CD8-positive, alpha-beta T cell (primary cell): ENCODE measurements at regions of chr12 and their contacts with region 1.

Region 1: GRCh38 chr12:96489103-96490056 is at the start of gene CFAP54:
- DNase-seq: peak; percentile 91 to 98 (median 95)
- ATAC-seq: peak; percentile 88
- H3K4me3 ChIP-seq: peak within 1 kb of the TSS; percentile 72 to 75
- H3K4me3 Mint-ChIP-seq: peak within 1 kb of the TSS; percentile 91
- H3K27ac ChIP-seq: peak within 1 kb of the TSS; percentile 58 to 76
- H3K27ac Mint-ChIP-seq: peak within 1 kb of the TSS; percentile 82
- H3K4me1 ChIP-seq: peaks cover 23% of the 10 kb centered on the region
- H3K4me1 Mint-ChIP-seq: peaks cover 24% of the 10 kb centered on the region
- H3K27me3 ChIP-seq: no peaks in the 10 kb centered on the region
- H3K27me3 Mint-ChIP-seq: no peaks in the 10 kb centered on the region
- CTCF ChIP-seq: peak; percentile 85
- total RNA-seq, gene CFAP54: 1.0 to 1.2 TPM

Region 2: DNA sequence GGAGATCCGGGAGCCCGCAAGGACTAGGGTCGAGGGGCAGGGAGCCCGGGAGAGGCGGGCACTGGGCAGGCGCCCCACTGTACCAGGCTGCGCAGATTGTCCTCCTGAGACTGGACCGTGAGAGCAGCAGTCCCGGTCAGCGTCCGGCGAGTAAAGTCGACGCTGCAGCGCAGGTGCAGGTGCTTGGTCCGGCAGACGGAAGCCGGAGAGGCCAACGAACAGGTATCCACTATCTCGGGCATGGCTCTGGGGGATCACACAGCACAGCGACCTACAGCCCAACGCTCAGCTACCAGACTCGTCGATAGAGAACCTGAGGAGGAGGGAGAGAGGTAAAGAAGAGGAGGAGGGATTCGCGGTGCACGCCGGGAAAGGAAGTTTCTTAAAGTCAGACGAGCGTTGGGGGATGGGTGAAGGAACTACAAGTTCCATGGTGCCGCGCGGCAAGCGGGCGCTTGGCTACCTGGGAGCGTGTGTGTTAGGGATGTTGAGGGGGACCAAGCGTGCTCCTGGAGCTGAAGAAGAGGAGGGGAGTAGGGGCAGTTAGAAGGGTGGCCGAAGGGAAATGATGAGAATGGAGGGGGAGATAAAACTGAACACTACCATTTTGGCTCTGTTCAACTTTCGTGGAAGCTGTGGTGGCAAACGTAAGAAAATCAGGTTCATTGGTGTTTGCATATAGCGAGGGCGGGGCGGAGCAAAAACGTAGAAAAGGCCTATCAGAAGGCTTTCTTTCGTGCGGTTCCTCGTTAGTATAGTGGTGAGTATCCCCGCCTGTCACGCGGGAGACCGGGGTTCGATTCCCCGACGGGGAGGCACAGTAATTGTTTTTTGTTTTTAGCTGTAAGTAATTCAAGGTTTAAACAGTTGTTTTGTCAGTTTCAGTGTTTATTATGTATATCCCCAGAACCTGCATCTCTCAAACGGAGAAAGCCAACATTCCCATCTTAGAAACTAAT is 453.8 kb before region 1 on chr12 and contains the start of gene LTA4H:
- CTCF ChIA-PET with region 1: no interaction called
- POLR2A ChIA-PET with region 1: no interaction called
- intact Hi-C with region 1: loop called in 1 of 2 experiments (anchors 1 kb)
- DNase-seq: peak; percentile 90 to 99 (median 97)
- ATAC-seq: peak; percentile 92
- H3K4me3 ChIP-seq: peak within 1 kb of the TSS; percentile 65 to 92
- H3K4me3 Mint-ChIP-seq: no peak within 1 kb of the TSS
- H3K27ac ChIP-seq: peak within 1 kb of the TSS; percentile 68 to 78
- H3K27ac Mint-ChIP-seq: no peak within 1 kb of the TSS
- H3K4me1 ChIP-seq: peaks cover 14% of the 10 kb centered on the region
- H3K4me1 Mint-ChIP-seq: peaks cover 12% of the 10 kb centered on the region
- H3K27me3 ChIP-seq: no peaks in the 10 kb centered on the region
- H3K27me3 Mint-ChIP-seq: no peaks in the 10 kb centered on the region
- CTCF ChIP-seq: no peak
- total RNA-seq, gene LTA4H: 38.4 to 42.9 TPM

Region 3: GRCh38 chr12:96237465-96238077 is 251.8 kb before region 1 on chr12:
- CTCF ChIA-PET with region 1: no interaction called
- POLR2A ChIA-PET with region 1: no interaction called
- intact Hi-C with region 1: loop called in 1 of 2 experiments (anchors 2 kb)
- DNase-seq: peak in 8 of 9 experiments; percentile 32 to 86 (median 62)
- ATAC-seq: peak; percentile 13
- H3K4me3 ChIP-seq: no peak overlapping the region
- H3K4me3 Mint-ChIP-seq: peak overlapping the region; percentile 10
- H3K27ac ChIP-seq: peak overlapping the region in 1 of 2 experiments; percentile 69
- H3K27ac Mint-ChIP-seq: peak overlapping the region; percentile 64
- H3K4me1 ChIP-seq: peaks cover 48% of the 10 kb centered on the region
- H3K4me1 Mint-ChIP-seq: peaks cover 66% of the 10 kb centered on the region
- H3K27me3 ChIP-seq: no peaks in the 10 kb centered on the region
- H3K27me3 Mint-ChIP-seq: no peaks in the 10 kb centered on the region
- CTCF ChIP-seq: no peak

Region 4: GRCh38 chr12:96343347-96343954 is 145.9 kb before region 1 on chr12:
- CTCF ChIA-PET with region 1: no interaction called
- POLR2A ChIA-PET with region 1: no interaction called
- intact Hi-C with region 1: no loop called
- DNase-seq: peak in 2 of 9 experiments; percentile 64 to 76
- ATAC-seq: peak; percentile 53
- H3K4me3 ChIP-seq: no peak overlapping the region
- H3K4me3 Mint-ChIP-seq: no peak overlapping the region
- H3K27ac ChIP-seq: no peak overlapping the region
- H3K27ac Mint-ChIP-seq: peak overlapping the region; percentile 18
- H3K4me1 ChIP-seq: peaks cover 22% of the 10 kb centered on the region
- H3K4me1 Mint-ChIP-seq: peaks cover 61% of the 10 kb centered on the region
- H3K27me3 ChIP-seq: no peaks in the 10 kb centered on the region
- H3K27me3 Mint-ChIP-seq: no peaks in the 10 kb centered on the region
- CTCF ChIP-seq: no peak

Region 5: GRCh38 chr12:96434107-96434506 is 55.3 kb before region 1 on chr12:
- CTCF ChIA-PET with region 1: no interaction called
- POLR2A ChIA-PET with region 1: no interaction called
- intact Hi-C with region 1: loop called (anchors 2 to 5 kb)
- DNase-seq: peak; percentile 37 to 96 (median 67)
- ATAC-seq: peak; percentile 97
- H3K4me3 ChIP-seq: peak overlapping the region in 1 of 2 experiments; percentile 24
- H3K4me3 Mint-ChIP-seq: peak overlapping the region; percentile 45
- H3K27ac ChIP-seq: peak overlapping the region; percentile 69 to 77
- H3K27ac Mint-ChIP-seq: peak overlapping the region; percentile 87
- H3K4me1 ChIP-seq: peaks cover 30% of the 10 kb centered on the region
- H3K4me1 Mint-ChIP-seq: peaks cover 36% of the 10 kb centered on the region
- H3K27me3 ChIP-seq: no peaks in the 10 kb centered on the region
- H3K27me3 Mint-ChIP-seq: no peaks in the 10 kb centered on the region
- CTCF ChIP-seq: no peak

Region 6: DNA sequence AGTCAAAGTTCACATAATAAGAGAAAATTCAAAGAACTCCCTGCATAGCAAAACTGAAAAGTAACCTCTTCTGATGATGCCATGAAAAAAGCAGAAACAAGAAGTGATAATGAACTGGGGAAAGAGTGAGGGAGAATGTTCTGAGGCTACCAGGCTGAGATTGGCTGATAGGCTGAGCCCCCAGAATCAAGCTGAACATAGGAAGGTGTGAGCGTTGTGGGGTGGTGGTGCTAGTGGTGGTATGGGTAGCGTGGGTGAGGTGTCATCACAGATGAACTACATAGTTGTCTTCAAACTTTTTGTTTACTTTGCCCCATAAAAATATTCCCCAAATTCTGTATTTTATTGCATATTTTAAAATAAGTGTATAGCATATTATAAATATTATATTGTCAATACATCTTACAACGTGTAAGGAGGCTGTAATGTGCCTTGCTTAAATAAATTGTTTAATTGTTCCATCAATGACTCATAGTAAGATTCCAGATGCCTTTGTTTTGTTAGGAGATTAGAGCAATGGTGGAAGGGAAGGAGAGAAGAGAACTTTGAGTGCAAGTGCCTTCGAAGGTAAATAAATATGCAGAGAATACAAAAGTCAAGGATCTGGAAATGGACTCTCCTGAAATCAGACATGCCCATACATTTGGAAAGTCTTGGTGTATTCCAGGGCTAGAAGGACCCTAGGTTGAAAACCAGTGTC is 15.8 kb before region 1 on chr12:
- CTCF ChIA-PET with region 1: no interaction called
- POLR2A ChIA-PET with region 1: no interaction called
- intact Hi-C with region 1: loop called in 1 of 2 experiments (anchors 1 kb)
- DNase-seq: peak in 5 of 9 experiments; percentile 11 to 79 (median 35)
- ATAC-seq: peak; percentile 85
- H3K4me3 ChIP-seq: no peak overlapping the region
- H3K4me3 Mint-ChIP-seq: no peak overlapping the region
- H3K27ac ChIP-seq: peak overlapping the region in 1 of 2 experiments; percentile 51
- H3K27ac Mint-ChIP-seq: no peak overlapping the region
- H3K4me1 ChIP-seq: no peaks in the 10 kb centered on the region
- H3K4me1 Mint-ChIP-seq: peaks cover 11% of the 10 kb centered on the region
- H3K27me3 ChIP-seq: no peaks in the 10 kb centered on the region
- H3K27me3 Mint-ChIP-seq: no peaks in the 10 kb centered on the region
- CTCF ChIP-seq: no peak

Region 7: GRCh38 chr12:96623656-96624217 is 134.4 kb after region 1 on chr12:
- CTCF ChIA-PET with region 1: no interaction called
- POLR2A ChIA-PET with region 1: no interaction called
- intact Hi-C with region 1: no loop called
- DNase-seq: no peak
- ATAC-seq: no peak
- H3K4me3 ChIP-seq: no peak overlapping the region
- H3K4me3 Mint-ChIP-seq: no peak overlapping the region
- H3K27ac ChIP-seq: no peak overlapping the region
- H3K27ac Mint-ChIP-seq: no peak overlapping the region
- H3K4me1 ChIP-seq: no peaks in the 10 kb centered on the region
- H3K4me1 Mint-ChIP-seq: no peaks in the 10 kb centered on the region
- H3K27me3 ChIP-seq: no peaks in the 10 kb centered on the region
- H3K27me3 Mint-ChIP-seq: peaks cover 9% of the 10 kb centered on the region
- CTCF ChIP-seq: no peak